ENCODE measurements at regions of chr19 and their contacts with region 1.

Region 1: DNA sequence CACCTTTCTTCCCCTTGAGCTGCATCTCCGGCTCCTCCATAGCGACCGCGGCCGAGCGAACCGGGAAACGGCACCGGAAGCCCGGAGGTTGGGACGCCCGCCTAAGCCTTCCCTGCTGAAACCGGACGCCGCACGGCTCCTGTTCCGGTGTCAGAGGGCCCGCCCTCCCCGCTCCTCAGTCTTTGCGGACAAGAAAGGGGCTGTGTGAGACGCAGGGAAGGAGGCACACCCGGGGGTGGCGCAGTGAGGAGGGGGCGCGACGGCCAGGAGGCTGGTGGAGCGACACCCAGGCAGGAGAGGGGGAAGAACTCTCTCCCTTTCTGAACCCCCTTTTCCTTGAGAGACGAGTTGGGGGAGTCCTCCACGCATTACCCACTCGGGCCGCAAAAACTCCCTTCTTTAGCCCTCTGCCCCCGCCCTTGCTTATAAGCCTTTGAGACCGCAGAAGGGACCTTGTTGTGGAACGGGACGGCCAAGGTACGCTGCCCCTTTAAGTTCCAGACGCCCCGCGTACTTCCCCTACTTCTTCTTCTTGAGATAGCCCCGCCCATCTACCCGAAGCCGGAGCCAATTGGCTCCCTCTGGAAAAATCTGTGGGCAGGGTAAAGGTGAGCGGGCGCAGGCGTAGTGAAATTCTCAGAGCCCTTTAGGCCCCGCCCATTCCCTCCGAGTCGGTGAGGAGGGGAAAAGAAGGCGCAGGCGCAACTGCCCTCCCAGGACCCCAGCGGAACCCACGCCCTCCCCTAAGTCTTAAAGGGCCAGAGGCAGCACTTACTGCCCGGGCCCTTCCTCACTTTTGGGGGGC is at the starts of genes BORCS8 and RFXANK:
- DNase-seq: peak; percentile 99
- ATAC-seq: peak; percentile 92
- H3K4me3 Mint-ChIP-seq: peak within 1 kb of the TSS; percentile 91
- H3K27ac Mint-ChIP-seq: peak within 1 kb of the TSS; percentile 94
- H3K4me1 Mint-ChIP-seq: peaks cover 41% of the 10 kb centered on the region
- H3K27me3 Mint-ChIP-seq: no peaks in the 10 kb centered on the region
- total RNA-seq, gene BORCS8: 19.5 to 25.3 TPM
- total RNA-seq, gene RFXANK: 56.2 to 68.5 TPM

Region 2: DNA sequence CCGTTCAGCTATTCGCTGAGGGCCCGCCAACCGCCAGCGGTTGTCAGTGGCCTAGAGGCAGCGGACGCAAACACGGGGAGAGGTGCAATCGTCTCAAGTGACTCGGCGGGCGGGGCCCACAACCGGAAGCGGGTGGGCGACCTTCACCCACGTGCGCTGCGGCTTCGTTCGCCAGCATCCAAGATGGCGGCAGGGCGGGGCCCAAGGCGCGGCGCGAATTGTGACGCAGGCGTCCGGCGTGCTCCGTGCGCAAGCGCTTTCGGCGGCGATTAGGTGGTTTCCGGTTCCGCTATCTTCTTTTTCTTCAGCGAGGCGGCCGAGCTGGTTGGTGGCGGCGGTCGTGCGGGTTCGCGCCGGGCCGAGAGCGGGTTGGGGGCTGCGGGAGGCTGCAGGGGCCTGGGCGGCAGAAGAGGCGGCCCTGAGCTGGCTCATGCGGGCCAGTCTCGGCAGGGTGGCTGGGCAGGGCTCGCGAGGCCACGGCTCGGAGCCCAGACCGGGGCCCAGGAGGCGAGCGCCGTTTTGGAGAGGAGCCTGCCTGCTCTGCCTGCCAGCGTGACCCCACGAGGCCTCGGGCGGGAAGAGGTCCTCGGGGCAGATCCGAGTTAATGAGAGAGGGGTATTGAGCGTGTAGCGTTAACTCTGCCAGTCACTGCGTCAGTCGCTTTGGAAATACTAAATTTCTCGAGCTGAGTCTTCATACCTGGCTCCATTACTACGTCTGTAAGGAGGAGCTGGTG is 620.5 kb before region 1 on chr19 and contains the start of gene UBA52:
- CTCF ChIA-PET with region 1: no interaction called
- POLR2A ChIA-PET with region 1: no interaction called
- intact Hi-C with region 1: loop called in 1 of 2 experiments (anchors 1 kb)
- DNase-seq: peak; percentile 100
- ATAC-seq: peak; percentile 94
- H3K4me3 Mint-ChIP-seq: peak within 1 kb of the TSS; percentile 89
- H3K27ac Mint-ChIP-seq: peak within 1 kb of the TSS; percentile 95
- H3K4me1 Mint-ChIP-seq: peaks cover 27% of the 10 kb centered on the region
- H3K27me3 Mint-ChIP-seq: no peaks in the 10 kb centered on the region
- total RNA-seq, gene UBA52: 1,703 to 2,296 TPM

Region 3: DNA sequence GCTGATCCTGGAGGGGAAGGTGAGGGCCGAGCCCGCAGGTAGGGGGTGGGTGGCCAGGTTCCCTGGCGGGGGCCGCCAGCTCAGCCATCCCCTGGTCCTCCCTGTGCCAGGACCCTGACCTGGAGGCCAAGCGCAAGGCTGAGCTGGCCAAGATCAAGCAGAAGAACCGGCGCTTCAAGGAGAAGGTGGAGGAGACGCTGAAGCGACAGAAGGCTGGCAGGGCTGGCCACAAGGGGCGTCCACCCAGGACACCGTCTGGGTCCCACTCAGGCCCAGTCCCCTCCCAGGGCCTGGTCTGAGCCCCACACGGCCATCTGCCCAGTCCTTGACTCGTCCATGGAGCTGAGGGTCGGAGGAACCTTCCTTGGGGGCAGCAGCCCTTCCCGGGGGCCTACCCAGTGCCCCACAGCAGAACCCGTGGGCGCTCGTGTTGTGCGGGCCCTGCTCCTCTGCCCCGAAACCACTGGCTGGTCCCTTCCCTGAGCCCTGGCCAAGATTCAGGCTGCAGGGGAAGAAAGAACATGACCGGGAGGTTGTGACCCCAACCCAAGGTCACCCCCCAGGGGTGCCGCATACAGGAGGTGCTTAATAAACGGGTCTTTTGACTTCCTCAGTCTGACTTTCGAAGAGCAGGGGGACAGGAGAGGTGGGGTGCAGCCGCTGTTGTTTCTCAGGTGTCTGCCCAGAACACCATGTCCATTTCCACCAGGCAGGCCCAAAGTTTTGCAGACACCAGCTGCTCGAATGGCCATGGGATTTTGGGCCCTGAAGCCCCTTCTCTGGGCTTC is 264.1 kb before region 1 on chr19:
- CTCF ChIA-PET with region 1: no interaction called
- POLR2A ChIA-PET with region 1: no interaction called
- intact Hi-C with region 1: no loop called
- DNase-seq: no peak
- ATAC-seq: no peak
- H3K4me3 Mint-ChIP-seq: no peak overlapping the region
- H3K27ac Mint-ChIP-seq: no peak overlapping the region
- H3K4me1 Mint-ChIP-seq: peaks cover 6% of the 10 kb centered on the region
- H3K27me3 Mint-ChIP-seq: no peaks in the 10 kb centered on the region

Region 4: DNA sequence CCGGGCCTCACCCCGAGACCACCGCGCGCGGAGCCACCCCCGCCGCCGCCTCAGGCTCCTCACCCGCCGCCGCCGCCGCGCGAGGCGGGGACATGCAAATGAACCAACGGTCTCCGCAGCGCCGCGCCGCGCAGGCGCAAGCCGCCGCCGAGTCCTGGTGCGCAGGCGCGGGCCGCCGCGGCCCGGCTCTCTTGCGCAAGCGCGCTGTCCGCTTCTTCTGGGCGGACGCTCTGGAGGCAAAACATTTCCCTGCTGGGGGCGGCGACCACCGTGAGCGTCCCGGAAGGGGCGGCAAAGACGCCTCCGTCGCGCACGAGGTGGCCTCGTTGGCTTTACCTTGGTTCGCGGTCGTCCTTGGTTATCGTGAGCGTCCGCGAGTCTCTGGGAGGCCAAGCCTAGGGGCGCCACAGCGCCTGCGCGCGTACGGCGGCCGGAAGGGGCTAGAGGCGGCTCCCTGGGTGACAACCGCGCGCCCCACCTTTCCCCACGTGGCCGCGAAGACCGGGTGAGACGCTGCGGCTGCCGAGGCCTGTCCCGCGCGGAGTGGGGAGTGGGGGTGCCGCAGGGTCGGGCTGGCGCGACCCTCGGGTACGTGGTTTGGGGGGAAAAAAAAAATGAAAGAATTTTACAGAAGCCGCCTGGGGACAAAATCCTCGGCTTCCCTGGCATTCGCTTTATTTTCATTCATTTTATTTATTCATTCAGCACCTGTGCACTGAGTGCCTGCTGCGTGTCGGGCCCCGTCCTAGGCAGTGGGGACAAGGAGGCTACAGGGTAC is 158.7 kb before region 1 on chr19 and contains the starts of genes ARMC6 and SUGP2:
- CTCF ChIA-PET with region 1: interaction called, 3 read pairs
- POLR2A ChIA-PET with region 1: no interaction called
- intact Hi-C with region 1: loop called (anchors 1 kb)
- DNase-seq: peak; percentile 92
- ATAC-seq: peak; percentile 78
- H3K4me3 Mint-ChIP-seq: peak within 1 kb of the TSS; percentile 98
- H3K27ac Mint-ChIP-seq: peak within 1 kb of the TSS; percentile 96
- H3K4me1 Mint-ChIP-seq: peaks cover 31% of the 10 kb centered on the region
- H3K27me3 Mint-ChIP-seq: no peaks in the 10 kb centered on the region
- total RNA-seq, gene ARMC6: 33.0 to 40.8 TPM
- total RNA-seq, gene SUGP2: 89.8 to 104 TPM

Region 5: DNA sequence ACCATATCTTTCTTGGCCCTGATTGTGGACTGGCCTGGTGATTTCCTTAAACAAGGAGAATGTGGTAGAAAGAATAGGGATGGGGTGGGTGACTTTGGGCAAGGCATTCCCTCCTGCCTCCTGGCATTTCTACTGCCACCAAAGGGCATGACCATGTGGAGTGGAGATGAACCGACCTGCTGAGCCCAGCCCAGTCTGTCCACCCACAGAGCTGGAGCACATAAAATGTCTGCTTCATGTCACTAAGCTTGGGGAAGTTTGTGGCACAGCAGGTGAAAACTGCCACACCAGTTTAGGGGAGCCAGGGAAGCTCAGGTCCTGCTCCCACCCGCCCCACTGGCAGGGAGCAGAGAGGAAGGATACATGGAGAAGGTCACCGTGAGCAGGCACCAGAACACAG is 60.3 kb before region 1 on chr19:
- CTCF ChIA-PET with region 1: no interaction called
- POLR2A ChIA-PET with region 1: no interaction called
- intact Hi-C with region 1: no loop called
- DNase-seq: no peak
- ATAC-seq: no peak
- H3K4me3 Mint-ChIP-seq: no peak overlapping the region
- H3K27ac Mint-ChIP-seq: no peak overlapping the region
- H3K4me1 Mint-ChIP-seq: peaks cover 9% of the 10 kb centered on the region
- H3K27me3 Mint-ChIP-seq: no peaks in the 10 kb centered on the region

Region 6: GRCh38 chr19:19203012-19203856 is 11.0 kb after region 1 on chr19 and contains the start of gene NR2C2AP:
- CTCF ChIA-PET with region 1: interaction called, 20 read pairs
- POLR2A ChIA-PET with region 1: interaction called, 31 read pairs
- intact Hi-C with region 1: loop called (anchors 1 kb)
- DNase-seq: peak; percentile 96
- ATAC-seq: peak; percentile 95
- H3K4me3 Mint-ChIP-seq: peak within 1 kb of the TSS; percentile 90
- H3K27ac Mint-ChIP-seq: peak within 1 kb of the TSS; percentile 84
- H3K4me1 Mint-ChIP-seq: peaks cover 30% of the 10 kb centered on the region
- H3K27me3 Mint-ChIP-seq: no peaks in the 10 kb centered on the region
- total RNA-seq, gene NR2C2AP: 34.7 to 46.6 TPM

Region 7: DNA sequence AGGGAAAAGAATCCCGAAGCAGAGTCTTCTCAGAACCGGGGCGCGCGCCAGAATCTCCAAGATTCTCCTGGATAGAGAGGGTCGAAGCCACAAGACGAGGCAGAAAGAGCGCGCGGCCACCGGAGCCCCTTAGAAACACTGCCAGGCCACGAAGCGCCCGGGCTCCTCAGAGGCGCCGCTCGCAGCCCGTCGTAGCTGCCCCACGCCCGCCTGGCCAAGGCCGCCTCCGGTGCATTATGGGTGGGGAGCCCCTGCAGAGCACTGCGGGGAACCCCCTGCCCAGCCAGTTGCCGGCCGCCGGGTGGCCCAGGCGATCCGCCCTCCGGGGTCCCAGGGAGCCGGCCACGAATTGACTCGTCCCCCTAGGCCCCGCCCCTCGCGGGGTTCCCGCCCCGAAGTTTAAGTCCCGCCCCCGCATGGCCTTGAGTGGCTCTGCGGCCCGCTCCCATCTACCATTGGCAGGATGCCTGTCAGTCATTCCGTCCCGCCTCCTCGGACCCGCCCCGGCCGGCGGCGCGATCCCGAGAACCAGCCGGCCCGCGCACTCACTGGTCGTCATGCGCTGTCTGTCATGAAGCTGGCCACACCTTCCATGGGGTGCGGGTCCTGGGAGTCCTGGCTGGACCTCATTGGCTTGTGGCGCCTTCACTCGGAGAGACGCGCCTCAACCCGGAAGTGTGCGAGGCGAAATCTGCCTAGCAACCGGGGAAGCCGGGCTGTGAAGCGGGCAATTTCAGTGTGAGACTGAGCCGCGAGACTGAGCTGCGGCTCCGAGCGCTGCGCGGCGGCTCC is 193.0 kb after region 1 on chr19:
- CTCF ChIA-PET with region 1: interaction called, 5 read pairs
- POLR2A ChIA-PET with region 1: no interaction called
- intact Hi-C with region 1: loop called in 1 of 2 experiments (anchors 1 kb)
- DNase-seq: peak; percentile 100
- ATAC-seq: peak; percentile 96
- H3K4me3 Mint-ChIP-seq: peak overlapping the region; percentile 86
- H3K27ac Mint-ChIP-seq: peak overlapping the region; percentile 78
- H3K4me1 Mint-ChIP-seq: peaks cover 36% of the 10 kb centered on the region
- H3K27me3 Mint-ChIP-seq: no peaks in the 10 kb centered on the region

Region 8: GRCh38 chr19:19643158-19644053 is 451.1 kb after region 1 on chr19 and contains the start of gene GMIP:
- CTCF ChIA-PET with region 1: no interaction called
- POLR2A ChIA-PET with region 1: no interaction called
- intact Hi-C with region 1: loop called in 1 of 2 experiments (anchors 5 kb)
- DNase-seq: peak; percentile 92
- ATAC-seq: peak; percentile 82
- H3K4me3 Mint-ChIP-seq: peak within 1 kb of the TSS; percentile 100
- H3K27ac Mint-ChIP-seq: peak within 1 kb of the TSS; percentile 96
- H3K4me1 Mint-ChIP-seq: peaks cover 10% of the 10 kb centered on the region
- H3K27me3 Mint-ChIP-seq: no peaks in the 10 kb centered on the region
- total RNA-seq, gene GMIP: 54.9 to 56.6 TPM